OCI-LY7 (cell line): ENCODE measurements at regions of chr16 and their contacts with region 1.

Region 1: GRCh38 chr16:66872943-66873684 is 7.2 kb upstream of the PDP2 start:
- DNase-seq: peak; percentile 88
- H3K4me3 ChIP-seq: peak overlapping the region; percentile 37
- H3K27ac ChIP-seq: peak overlapping the region; percentile 42
- H3K4me1 ChIP-seq: peaks cover 37% of the 10 kb centered on the region
- CTCF ChIP-seq: peak; percentile 99

Region 2: GRCh38 chr16:65965628-65966027 is 907.5 kb before region 1 on chr16:
- CTCF ChIA-PET with region 1: no interaction called
- POLR2A ChIA-PET with region 1: no interaction called
- intact Hi-C with region 1: no loop called
- DNase-seq: no peak
- H3K4me3 ChIP-seq: no peak overlapping the region
- H3K27ac ChIP-seq: no peak overlapping the region
- H3K4me1 ChIP-seq: no peaks in the 10 kb centered on the region
- CTCF ChIP-seq: no peak

Region 3: DNA sequence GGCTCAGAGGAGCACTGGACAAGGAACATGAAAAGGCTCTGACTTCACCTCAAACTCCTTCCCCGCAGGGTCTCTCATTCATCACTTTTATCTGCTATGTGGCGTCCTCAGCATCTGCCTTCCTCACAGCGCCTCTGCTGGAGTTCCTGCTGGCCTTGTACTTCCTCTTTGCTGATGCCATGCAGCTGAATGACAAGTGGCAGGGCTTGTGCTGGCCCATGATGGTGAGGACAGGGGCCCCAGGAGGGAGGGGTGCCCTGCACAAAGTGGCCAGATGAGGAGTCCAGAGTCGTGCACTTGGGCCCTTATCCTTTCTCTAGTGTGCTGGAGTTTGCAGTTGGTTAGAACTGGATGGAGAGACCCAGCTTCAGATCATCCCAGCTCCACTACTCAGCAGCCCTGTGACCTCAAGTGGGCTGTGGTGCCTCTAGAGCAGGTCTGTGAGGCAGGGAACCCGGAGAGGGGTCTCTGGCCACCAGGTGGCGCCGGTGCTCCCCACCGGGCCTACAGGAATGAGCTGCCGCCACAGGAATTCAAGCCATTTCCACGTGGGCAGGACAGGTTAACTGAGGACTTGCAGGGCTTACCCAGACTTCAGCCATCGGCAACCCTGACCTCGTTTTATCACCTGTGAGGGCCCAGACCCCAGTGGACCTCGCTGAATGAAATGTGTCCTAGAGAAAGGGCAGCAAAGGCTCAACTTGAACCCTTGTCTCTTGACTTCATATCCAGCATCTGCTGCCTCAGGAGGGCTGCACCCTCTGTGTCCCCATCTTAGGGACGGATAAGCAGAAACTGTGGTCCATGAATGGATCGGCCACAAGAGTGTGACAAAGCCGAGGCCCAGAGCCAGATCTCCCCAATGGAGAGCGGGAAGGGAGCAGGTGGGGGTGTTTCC is 264.6 kb before region 1 on chr16:
- CTCF ChIA-PET with region 1: interaction called, 3 read pairs
- POLR2A ChIA-PET with region 1: interaction called, 4 read pairs
- intact Hi-C with region 1: loop called (anchors 2 kb)
- DNase-seq: peak; percentile 83
- H3K4me3 ChIP-seq: no peak overlapping the region
- H3K27ac ChIP-seq: peak overlapping the region; percentile 45
- H3K4me1 ChIP-seq: peaks cover 40% of the 10 kb centered on the region
- CTCF ChIP-seq: peak; percentile 98

Region 4: GRCh38 chr16:66662445-66663194 is 210.5 kb before region 1 on chr16:
- CTCF ChIA-PET with region 1: interaction called, 4 read pairs
- POLR2A ChIA-PET with region 1: interaction called, 4 read pairs
- intact Hi-C with region 1: loop called (anchors 2 kb)
- DNase-seq: peak; percentile 44
- H3K4me3 ChIP-seq: no peak overlapping the region
- H3K27ac ChIP-seq: no peak overlapping the region
- H3K4me1 ChIP-seq: no peaks in the 10 kb centered on the region
- CTCF ChIP-seq: peak; percentile 80

Region 5: DNA sequence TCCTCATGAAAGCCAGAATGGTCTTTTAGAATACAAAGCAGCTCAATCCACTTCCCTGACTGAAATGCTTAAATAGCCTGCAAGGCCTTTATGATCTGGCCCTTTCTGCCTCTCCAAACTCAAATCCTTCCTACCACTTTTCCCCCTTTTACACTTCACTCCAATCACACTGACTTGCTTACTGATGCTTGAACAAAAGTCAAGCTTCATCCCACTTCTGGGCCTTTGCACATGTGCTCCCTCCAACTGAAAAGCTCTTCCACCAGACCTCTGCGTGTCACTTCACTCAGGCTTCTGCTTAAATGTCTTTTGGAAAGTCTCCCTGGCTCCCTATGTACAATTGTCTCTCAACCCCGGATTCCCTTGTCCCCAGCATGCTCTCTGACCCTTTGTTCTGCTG is 58.4 kb before region 1 on chr16:
- CTCF ChIA-PET with region 1: no interaction called
- POLR2A ChIA-PET with region 1: no interaction called
- intact Hi-C with region 1: no loop called
- DNase-seq: no peak
- H3K4me3 ChIP-seq: no peak overlapping the region
- H3K27ac ChIP-seq: no peak overlapping the region
- H3K4me1 ChIP-seq: no peaks in the 10 kb centered on the region
- CTCF ChIP-seq: no peak

Region 6: GRCh38 chr16:66830422-66831404 is 42.4 kb before region 1 on chr16 and contains the start of gene NAE1:
- CTCF ChIA-PET with region 1: interaction called, 6 read pairs
- POLR2A ChIA-PET with region 1: interaction called, 6 read pairs
- intact Hi-C with region 1: loop called (anchors 2 kb)
- DNase-seq: peak; percentile 94
- H3K4me3 ChIP-seq: peak within 1 kb of the TSS; percentile 81
- H3K27ac ChIP-seq: peak within 1 kb of the TSS; percentile 69
- H3K4me1 ChIP-seq: peaks cover 22% of the 10 kb centered on the region
- CTCF ChIP-seq: peak; percentile 92
- total RNA-seq, gene NAE1: 85.0 and 85.2 TPM in 2 replicates